OCI-LY7 (cell line): ENCODE measurements at regions of chr1 and their contacts with region 1.

Region 1: GRCh38 chr1:182446033-182446669 is 3.8 kb upstream of the RGSL1 start:
- DNase-seq: peak; percentile 67
- H3K4me3 ChIP-seq: no peak overlapping the region
- H3K27ac ChIP-seq: no peak overlapping the region
- H3K4me1 ChIP-seq: no peaks in the 10 kb centered on the region
- CTCF ChIP-seq: peak; percentile 96

Region 2: GRCh38 chr1:182568647-182569284 is 122.6 kb after region 1 on chr1:
- CTCF ChIA-PET with region 1: no interaction called
- POLR2A ChIA-PET with region 1: no interaction called
- intact Hi-C with region 1: loop called (anchors 10 kb)
- DNase-seq: peak; percentile 73
- H3K4me3 ChIP-seq: no peak overlapping the region
- H3K27ac ChIP-seq: peak overlapping the region; percentile 66
- H3K4me1 ChIP-seq: peaks cover 41% of the 10 kb centered on the region
- CTCF ChIP-seq: no peak

Region 3: DNA sequence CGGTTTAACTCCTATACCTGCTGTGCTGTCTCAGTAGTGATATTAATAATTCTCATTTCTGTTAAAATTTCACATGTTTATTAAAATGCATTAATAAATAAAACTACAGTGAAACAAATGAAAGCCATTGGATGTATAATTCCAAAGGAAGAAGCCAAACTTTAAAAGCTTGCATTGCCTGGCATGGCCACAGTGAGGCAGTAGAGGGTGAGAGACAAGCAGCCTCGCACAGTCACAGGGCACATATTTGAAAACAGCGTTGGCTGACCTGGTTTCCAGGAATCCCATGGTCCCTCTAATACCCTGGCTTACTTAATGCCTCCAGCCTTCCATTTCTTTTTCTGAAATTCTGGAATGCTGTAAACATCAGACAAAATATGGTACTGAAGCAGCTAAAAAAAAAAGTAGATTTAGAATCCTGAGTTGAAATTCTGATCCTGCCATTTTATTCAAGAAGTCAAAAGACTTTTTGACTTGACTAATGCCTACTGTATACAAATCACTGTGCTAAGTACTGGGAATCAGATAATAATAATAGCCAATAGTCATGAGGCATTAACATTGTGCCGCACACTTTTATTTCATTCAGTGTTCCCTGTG is 149.6 kb after region 1 on chr1:
- CTCF ChIA-PET with region 1: no interaction called
- POLR2A ChIA-PET with region 1: interaction called, 3 read pairs
- intact Hi-C with region 1: loop called (anchors 2 kb)
- DNase-seq: peak; percentile 63
- H3K4me3 ChIP-seq: no peak overlapping the region
- H3K27ac ChIP-seq: no peak overlapping the region
- H3K4me1 ChIP-seq: peaks cover 18% of the 10 kb centered on the region
- CTCF ChIP-seq: peak; percentile 99